ENCODE measurements at regions of chr10 and their contacts with region 1.

Region 1: DNA sequence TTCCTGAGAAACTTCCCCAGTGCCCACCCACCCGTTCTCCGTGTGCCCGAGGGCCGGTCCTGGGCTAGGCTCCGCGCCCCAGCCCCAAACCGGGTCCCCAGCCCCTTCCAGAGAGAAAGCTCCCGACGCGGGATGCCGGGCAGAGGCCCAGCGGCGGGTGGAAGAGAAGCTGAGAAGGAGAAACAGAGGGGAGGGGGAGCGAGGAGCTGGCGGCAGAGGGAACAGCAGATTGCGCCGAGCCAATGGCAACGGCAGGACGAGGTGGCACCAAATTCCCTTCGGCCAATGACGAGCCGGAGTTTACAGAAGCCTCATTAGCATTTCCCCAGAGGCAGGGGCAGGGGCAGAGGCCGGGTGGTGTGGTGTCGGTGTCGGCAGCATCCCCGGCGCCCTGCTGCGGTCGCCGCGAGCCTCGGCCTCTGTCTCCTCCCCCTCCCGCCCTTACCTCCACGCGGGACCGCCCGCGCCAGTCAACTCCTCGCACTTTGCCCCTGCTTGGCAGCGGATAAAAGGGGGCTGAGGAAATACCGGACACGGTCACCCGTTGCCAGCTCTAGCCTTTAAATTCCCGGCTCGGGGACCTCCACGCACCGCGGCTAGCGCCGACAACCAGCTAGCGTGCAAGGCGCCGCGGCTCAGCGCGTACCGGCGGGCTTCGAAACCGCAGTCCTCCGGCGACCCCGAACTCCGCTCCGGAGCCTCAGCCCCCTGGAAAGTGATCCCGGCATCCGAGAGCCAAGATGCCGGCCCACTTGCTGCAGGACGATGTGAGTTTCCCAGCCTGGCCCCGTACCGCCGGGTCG is at the start of gene SCD:
- DNase-seq: peak; percentile 82 to 89 (median 88)
- H3K4me3 ChIP-seq: peak within 1 kb of the TSS; percentile 50 to 73 (median 59)
- H3K4me3 Mint-ChIP-seq: peak within 1 kb of the TSS; percentile 93 to 96
- H3K27ac ChIP-seq: no peak within 1 kb of the TSS
- H3K27ac Mint-ChIP-seq: peak within 1 kb of the TSS in 3 of 7 donors; percentile 26 to 69 (median 49)
- H3K4me1 ChIP-seq: peaks cover 17 to 22% of the 10 kb centered on the region in 2 donors
- H3K4me1 Mint-ChIP-seq: peaks cover 22% of the 10 kb centered on the region
- H3K27me3 ChIP-seq: peaks cover 15 to 30% of the 10 kb centered on the region in 2 donors
- H3K27me3 Mint-ChIP-seq: peaks cover 39 to 54% (median 42%) of the 10 kb centered on the region in 3 donors
- CTCF ChIP-seq: no peak
- polyA plus RNA-seq, gene SCD: 1.00 to 3.4 (median 1.0) TPM

Region 2: GRCh38 chr10:100238429-100238828 is 108.5 kb before region 1 on chr10:
- intact Hi-C with region 1: no loop called
- DNase-seq: no peak
- H3K4me3 ChIP-seq: no peak overlapping the region
- H3K4me3 Mint-ChIP-seq: no peak overlapping the region
- H3K27ac ChIP-seq: no peak overlapping the region
- H3K27ac Mint-ChIP-seq: no peak overlapping the region
- H3K4me1 ChIP-seq: no peaks in the 10 kb centered on the region
- H3K4me1 Mint-ChIP-seq: no peaks in the 10 kb centered on the region
- H3K27me3 ChIP-seq: no peaks in the 10 kb centered on the region
- H3K27me3 Mint-ChIP-seq: no peaks in the 10 kb centered on the region
- CTCF ChIP-seq: no peak

Region 3: DNA sequence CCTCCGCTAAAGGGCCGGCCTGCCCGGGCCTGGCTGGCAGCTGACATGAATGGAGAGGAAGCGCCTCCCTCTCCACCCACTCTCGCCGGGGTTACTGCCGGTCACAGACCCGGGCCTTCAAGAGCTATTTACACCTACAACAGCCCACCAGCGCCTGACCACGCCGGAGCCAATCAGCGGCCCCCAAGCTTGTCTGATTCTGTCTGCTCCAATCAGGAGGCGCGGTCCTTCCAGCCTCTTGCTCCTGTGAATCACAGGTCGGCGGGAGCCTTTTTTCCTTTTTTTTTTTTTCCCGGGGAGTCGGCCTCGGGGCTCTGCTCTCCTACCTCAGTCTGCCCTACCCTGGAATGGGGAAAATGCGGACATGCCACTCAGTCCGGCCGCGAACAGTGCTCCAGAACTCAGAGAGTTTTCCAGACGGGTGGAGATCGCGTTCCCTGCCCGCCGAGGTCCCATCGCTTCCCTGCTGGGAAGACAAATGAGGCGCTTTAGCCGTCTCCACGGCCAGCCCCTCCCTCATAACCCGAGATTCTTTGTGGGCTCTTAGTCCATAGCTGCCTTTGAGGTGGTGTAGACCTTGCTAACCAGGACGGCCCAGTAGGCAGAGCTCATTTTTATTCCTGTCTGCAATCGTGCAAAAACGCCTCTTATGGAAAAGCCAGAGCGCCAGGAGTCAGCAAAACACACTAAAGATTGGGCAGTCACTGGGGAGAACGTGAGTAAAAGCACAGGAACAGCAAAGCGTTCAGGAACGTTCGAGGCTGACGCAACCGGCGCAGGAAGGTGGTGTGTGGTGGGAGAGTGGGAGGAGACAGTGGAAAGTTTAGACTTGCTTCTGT is 26.6 kb after region 1 on chr10:
- intact Hi-C with region 1: loop called in 1 of 2 experiments (anchors 2 kb)
- DNase-seq: peak; percentile 86 to 95 (median 92)
- H3K4me3 ChIP-seq: peak overlapping the region; percentile 48 to 84 (median 62)
- H3K4me3 Mint-ChIP-seq: no peak overlapping the region
- H3K27ac ChIP-seq: peak overlapping the region; percentile 60 to 77
- H3K27ac Mint-ChIP-seq: no peak overlapping the region
- H3K4me1 ChIP-seq: peaks cover 46% of the 10 kb centered on the region in 2 donors
- H3K4me1 Mint-ChIP-seq: peaks cover 29% of the 10 kb centered on the region
- H3K27me3 ChIP-seq: no peaks in the 10 kb centered on the region
- H3K27me3 Mint-ChIP-seq: peaks cover 0 to 3% (median 2%) of the 10 kb centered on the region in 3 donors
- CTCF ChIP-seq: no peak

Region 4: DNA sequence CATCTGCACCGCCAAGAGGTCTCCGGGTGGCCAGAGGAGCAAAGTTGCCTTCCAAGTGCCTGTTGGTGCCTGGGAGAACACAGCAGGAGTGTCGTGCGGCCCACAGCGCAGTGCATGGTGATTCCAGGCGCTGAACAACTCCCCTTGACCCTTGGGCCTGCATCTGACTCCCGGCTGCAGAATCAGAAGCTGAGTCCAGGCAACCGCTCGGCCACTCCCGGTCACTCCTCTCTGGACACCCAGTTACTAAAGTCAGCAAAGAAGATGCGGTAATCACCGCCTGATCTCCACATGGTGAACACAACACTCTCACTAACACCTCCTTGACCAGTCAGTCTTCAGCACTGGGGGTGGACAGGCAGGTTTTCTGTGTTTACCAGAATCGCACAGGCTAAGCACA is 35.6 kb after region 1 on chr10:
- intact Hi-C with region 1: loop called in 1 of 2 experiments (anchors 5 kb)
- DNase-seq: no peak
- H3K4me3 ChIP-seq: no peak overlapping the region
- H3K4me3 Mint-ChIP-seq: no peak overlapping the region
- H3K27ac ChIP-seq: no peak overlapping the region
- H3K27ac Mint-ChIP-seq: no peak overlapping the region
- H3K4me1 ChIP-seq: no peaks in the 10 kb centered on the region
- H3K4me1 Mint-ChIP-seq: peaks cover 9% of the 10 kb centered on the region
- H3K27me3 ChIP-seq: no peaks in the 10 kb centered on the region
- H3K27me3 Mint-ChIP-seq: peaks cover 0 to 2% (median 0%) of the 10 kb centered on the region in 3 donors
- CTCF ChIP-seq: no peak

Measured in CD14-positive monocyte (primary cell).